Caco-2 (cell line): ENCODE measurements at regions of chr6 and their contacts with region 1.

Region 1: GRCh38 chr6:99868074-99868702 is 125.8 kb downstream of the MCHR2 start:
- DNase-seq: peak; percentile 56 to 76
- H3K4me3 ChIP-seq: no peak overlapping the region
- H3K4me3 Mint-ChIP-seq: no peak overlapping the region
- H3K27ac Mint-ChIP-seq: no peak overlapping the region
- H3K4me1 ChIP-seq: no peaks in the 10 kb centered on the region
- H3K4me1 Mint-ChIP-seq: no peaks in the 10 kb centered on the region
- H3K27me3 ChIP-seq: peaks cover 2% of the 10 kb centered on the region; the same call in 1 of the 2 replicates
- H3K27me3 Mint-ChIP-seq: peaks cover 12% of the 10 kb centered on the region
- CTCF ChIP-seq: peak; percentile 85 to 87

Region 2: GRCh38 chr6:99905209-99906106 is 37.3 kb after region 1 on chr6:
- CTCF ChIA-PET with region 1: interaction called, 17 read pairs
- POLR2A ChIA-PET with region 1: no interaction called
- intact Hi-C with region 1: loop called (anchors 1 kb)
- DNase-seq: peak in 1 of 2 experiments; percentile 49
- H3K4me3 ChIP-seq: no peak overlapping the region
- H3K4me3 Mint-ChIP-seq: no peak overlapping the region
- H3K27ac Mint-ChIP-seq: no peak overlapping the region
- H3K4me1 ChIP-seq: no peaks in the 10 kb centered on the region
- H3K4me1 Mint-ChIP-seq: no peaks in the 10 kb centered on the region
- H3K27me3 ChIP-seq: no peaks in the 10 kb centered on the region
- H3K27me3 Mint-ChIP-seq: peaks cover 19% of the 10 kb centered on the region
- CTCF ChIP-seq: peak; percentile 67

Region 3: GRCh38 chr6:100001915-100002388 is 133.8 kb after region 1 on chr6:
- CTCF ChIA-PET with region 1: interaction called, 5 read pairs
- POLR2A ChIA-PET with region 1: no interaction called
- intact Hi-C with region 1: loop called (anchors 2 kb)
- DNase-seq: peak; percentile 41 to 45
- H3K4me3 ChIP-seq: no peak overlapping the region
- H3K4me3 Mint-ChIP-seq: no peak overlapping the region
- H3K27ac Mint-ChIP-seq: no peak overlapping the region
- H3K4me1 ChIP-seq: no peaks in the 10 kb centered on the region
- H3K4me1 Mint-ChIP-seq: no peaks in the 10 kb centered on the region
- H3K27me3 ChIP-seq: no peaks in the 10 kb centered on the region
- H3K27me3 Mint-ChIP-seq: peaks cover 8% of the 10 kb centered on the region
- CTCF ChIP-seq: peak; percentile 85 to 92